CD4-positive, alpha-beta T cell (primary cell): ENCODE measurements at regions of chr17 and their contacts with region 1.

Region 1: GRCh38 chr17:19766422-19767270 is 18.5 kb upstream of the ALDH3A1 start:
- DNase-seq: peak; percentile 62 to 89 (median 78)
- ATAC-seq: peak; percentile 80
- H3K4me3 ChIP-seq: no peak overlapping the region
- H3K4me3 Mint-ChIP-seq: peak overlapping the region; percentile 17
- H3K27ac ChIP-seq: no peak overlapping the region
- H3K27ac Mint-ChIP-seq: peak overlapping the region; percentile 84
- H3K4me1 ChIP-seq: peaks cover 54% of the 10 kb centered on the region
- H3K4me1 Mint-ChIP-seq: peaks cover 52% of the 10 kb centered on the region
- H3K27me3 ChIP-seq: no peaks in the 10 kb centered on the region
- H3K27me3 Mint-ChIP-seq: no peaks in the 10 kb centered on the region
- CTCF ChIP-seq: peak; percentile 97

Region 2: DNA sequence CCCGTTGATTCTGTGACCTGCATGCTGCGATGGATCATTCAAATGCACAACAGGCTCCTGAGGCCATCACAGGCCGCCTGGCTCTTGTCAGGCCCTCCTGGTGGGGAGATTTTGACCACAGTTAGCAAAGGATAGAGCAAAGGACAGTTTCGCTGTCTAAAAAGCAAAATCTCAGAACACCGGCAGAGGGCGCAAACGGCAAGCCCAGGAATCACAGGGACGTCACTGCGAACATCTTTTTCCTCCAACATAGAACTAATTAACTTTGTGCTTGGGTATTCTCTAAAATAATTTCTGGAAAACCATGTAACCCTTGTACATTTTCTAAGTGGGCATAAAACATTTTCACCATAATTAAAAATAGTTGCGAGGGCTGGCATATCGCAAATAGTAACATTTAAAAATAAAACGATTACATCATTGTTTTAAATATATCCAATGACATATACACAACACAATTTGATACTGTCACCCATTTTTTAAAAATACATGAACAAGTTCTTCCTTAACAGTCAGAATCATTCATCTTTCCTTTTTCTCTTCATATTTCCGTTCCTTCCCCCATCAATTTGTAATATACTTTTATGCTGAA is 252.7 kb before region 1 on chr17:
- CTCF ChIA-PET with region 1: interaction called, 9 read pairs
- POLR2A ChIA-PET with region 1: interaction called, 4 read pairs
- intact Hi-C with region 1: loop called (anchors 1 kb)
- DNase-seq: peak; percentile 42 to 84 (median 62)
- ATAC-seq: peak; percentile 75
- H3K4me3 ChIP-seq: no peak overlapping the region
- H3K4me3 Mint-ChIP-seq: no peak overlapping the region
- H3K27ac ChIP-seq: no peak overlapping the region
- H3K27ac Mint-ChIP-seq: peak overlapping the region; percentile 12
- H3K4me1 ChIP-seq: peaks cover 4% of the 10 kb centered on the region
- H3K4me1 Mint-ChIP-seq: peaks cover 6% of the 10 kb centered on the region
- H3K27me3 ChIP-seq: no peaks in the 10 kb centered on the region
- H3K27me3 Mint-ChIP-seq: no peaks in the 10 kb centered on the region
- CTCF ChIP-seq: peak; percentile 94

Region 3: GRCh38 chr17:19554377-19554776 is 212.3 kb before region 1 on chr17:
- CTCF ChIA-PET with region 1: no interaction called
- POLR2A ChIA-PET with region 1: no interaction called
- intact Hi-C with region 1: no loop called
- DNase-seq: no peak
- ATAC-seq: no peak
- H3K4me3 ChIP-seq: no peak overlapping the region
- H3K4me3 Mint-ChIP-seq: no peak overlapping the region
- H3K27ac ChIP-seq: no peak overlapping the region
- H3K27ac Mint-ChIP-seq: no peak overlapping the region
- H3K4me1 ChIP-seq: no peaks in the 10 kb centered on the region
- H3K4me1 Mint-ChIP-seq: no peaks in the 10 kb centered on the region
- H3K27me3 ChIP-seq: no peaks in the 10 kb centered on the region
- H3K27me3 Mint-ChIP-seq: peaks cover 8% of the 10 kb centered on the region
- CTCF ChIP-seq: no peak

Region 4: GRCh38 chr17:19781488-19782458 is 15.1 kb after region 1 on chr17:
- CTCF ChIA-PET with region 1: interaction called, 10 read pairs
- POLR2A ChIA-PET with region 1: interaction called, 5 read pairs
- intact Hi-C with region 1: no loop called
- DNase-seq: no peak
- ATAC-seq: no peak
- H3K4me3 ChIP-seq: no peak overlapping the region
- H3K4me3 Mint-ChIP-seq: no peak overlapping the region
- H3K27ac ChIP-seq: no peak overlapping the region
- H3K27ac Mint-ChIP-seq: no peak overlapping the region
- H3K4me1 ChIP-seq: no peaks in the 10 kb centered on the region
- H3K4me1 Mint-ChIP-seq: no peaks in the 10 kb centered on the region
- H3K27me3 ChIP-seq: no peaks in the 10 kb centered on the region
- H3K27me3 Mint-ChIP-seq: no peaks in the 10 kb centered on the region
- CTCF ChIP-seq: no peak